Gastrocnemius medialis (tissue), 4 donors: ENCODE measurements at regions of chr15 and their contacts with region 1.

Region 1: GRCh38 chr15:80989518-80990478 is at the start of gene MESD:
- DNase-seq: peak; percentile 96
- ATAC-seq: peak; percentile 95
- H3K4me3 ChIP-seq: peak within 1 kb of the TSS; percentile 73 to 93 (median 91)
- H3K27ac ChIP-seq: peak within 1 kb of the TSS; percentile 87 to 91 (median 88)
- H3K4me1 ChIP-seq: peaks cover 26 to 37% of the 10 kb centered on the region in 2 donors
- H3K27me3 ChIP-seq: no peaks in the 10 kb centered on the region
- CTCF ChIP-seq: no peak
- POLR2A ChIP-seq: peak; percentile 82 to 85
- total RNA-seq, gene MESD: 5.5 to 7.9 (median 6.6) TPM

Region 2: DNA sequence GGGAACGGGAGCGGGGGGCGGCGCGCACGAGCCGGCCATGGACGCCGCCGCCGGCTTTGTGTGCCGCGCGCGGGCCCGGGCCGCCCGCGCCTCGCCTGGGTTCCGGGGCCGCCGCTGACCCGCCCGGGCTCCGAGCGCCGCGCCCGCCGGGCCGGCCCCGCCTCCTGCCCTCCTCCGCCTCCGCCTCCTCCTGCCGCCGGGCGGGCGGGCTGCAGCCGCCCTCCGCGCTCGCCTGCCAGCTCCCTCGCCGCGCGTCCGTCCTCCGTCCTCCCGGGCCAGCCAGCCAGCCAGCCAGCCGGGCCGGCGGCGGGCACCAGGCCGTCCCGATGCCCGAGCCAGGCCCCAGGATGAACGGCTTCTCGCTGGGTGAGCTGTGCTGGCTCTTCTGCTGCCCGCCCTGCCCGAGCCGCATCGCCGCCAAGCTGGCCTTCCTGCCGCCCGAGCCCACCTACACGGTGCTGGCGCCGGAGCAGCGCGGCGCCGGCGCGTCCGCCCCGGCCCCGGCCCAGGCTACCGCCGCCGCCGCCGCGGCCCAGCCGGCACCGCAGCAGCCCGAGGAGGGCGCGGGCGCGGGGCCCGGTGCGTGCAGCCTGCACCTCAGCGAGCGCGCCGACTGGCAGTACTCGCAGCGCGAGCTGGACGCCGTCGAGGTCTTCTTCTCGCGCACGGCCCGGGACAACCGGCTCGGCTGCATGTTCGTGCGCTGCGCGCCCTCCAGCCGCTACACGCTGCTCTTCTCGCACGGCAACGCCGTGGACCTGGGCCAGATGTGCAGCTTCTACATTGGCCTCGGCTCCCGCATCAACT is 294.5 kb before region 1 on chr15 and contains the start of gene ABHD17C:
- in situ Hi-C with region 1: no loop called
- intact Hi-C with region 1: loop called (anchors 10 kb)
- DNase-seq: peak; percentile 22 to 25
- ATAC-seq: peak; percentile 80 to 84
- H3K4me3 ChIP-seq: peak within 1 kb of the TSS; percentile 65 to 93 (median 82)
- H3K27ac ChIP-seq: peak within 1 kb of the TSS; percentile 64 to 82 (median 70)
- H3K4me1 ChIP-seq: peaks cover 7 to 10% of the 10 kb centered on the region in 2 donors
- H3K27me3 ChIP-seq: no peaks in the 10 kb centered on the region
- CTCF ChIP-seq: no peak
- POLR2A ChIP-seq: no peak
- total RNA-seq, gene ABHD17C: 0.98 to 3.3 (median 2.5) TPM in 3 of 4 donors, not detected in the other

Region 3: DNA sequence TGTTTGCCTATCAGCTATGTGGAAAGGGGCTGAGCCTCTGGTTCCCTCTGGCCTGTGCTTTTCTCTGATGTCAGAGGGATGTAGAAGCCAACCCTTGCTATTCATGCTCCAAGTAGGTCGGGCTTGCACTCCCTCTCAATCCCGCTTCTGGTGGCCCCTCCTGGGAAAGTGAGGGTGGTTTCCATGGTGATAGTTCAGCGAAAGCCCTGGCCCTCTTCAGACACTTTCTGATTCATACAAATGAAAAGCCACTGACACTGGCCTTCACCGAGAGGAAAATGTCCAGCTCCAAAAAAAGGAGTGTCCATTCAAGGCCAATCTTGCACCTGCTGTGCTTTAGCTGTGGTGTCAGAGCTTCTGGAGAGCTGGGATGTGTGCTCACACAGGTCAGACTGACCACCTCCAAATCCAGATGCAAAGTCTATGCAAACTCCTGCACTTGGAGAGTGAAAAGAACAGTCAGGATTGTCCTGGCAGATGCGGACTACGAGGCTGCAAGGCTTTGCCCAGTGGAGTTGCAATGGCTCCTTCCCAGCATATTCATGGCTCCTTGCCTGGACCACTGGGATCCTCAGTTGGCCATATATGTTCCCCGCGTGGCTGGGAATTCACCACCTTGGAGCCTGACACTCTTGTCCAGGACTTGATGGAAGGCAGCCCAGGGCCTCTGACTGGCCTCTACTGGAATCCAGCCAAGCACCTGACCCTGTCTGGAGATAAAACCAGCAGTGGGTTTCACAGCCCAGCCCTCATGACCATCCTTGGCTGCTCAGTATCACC is 114.0 kb before region 1 on chr15:
- in situ Hi-C with region 1: no loop called
- intact Hi-C with region 1: no loop called
- DNase-seq: peak in 1 of 2 donors; percentile 21
- ATAC-seq: no peak
- H3K4me3 ChIP-seq: no peak overlapping the region
- H3K27ac ChIP-seq: no peak overlapping the region
- H3K4me1 ChIP-seq: peaks cover 0 to 14% of the 10 kb centered on the region in 2 donors
- H3K27me3 ChIP-seq: no peaks in the 10 kb centered on the region
- CTCF ChIP-seq: no peak
- POLR2A ChIP-seq: no peak

Region 4: DNA sequence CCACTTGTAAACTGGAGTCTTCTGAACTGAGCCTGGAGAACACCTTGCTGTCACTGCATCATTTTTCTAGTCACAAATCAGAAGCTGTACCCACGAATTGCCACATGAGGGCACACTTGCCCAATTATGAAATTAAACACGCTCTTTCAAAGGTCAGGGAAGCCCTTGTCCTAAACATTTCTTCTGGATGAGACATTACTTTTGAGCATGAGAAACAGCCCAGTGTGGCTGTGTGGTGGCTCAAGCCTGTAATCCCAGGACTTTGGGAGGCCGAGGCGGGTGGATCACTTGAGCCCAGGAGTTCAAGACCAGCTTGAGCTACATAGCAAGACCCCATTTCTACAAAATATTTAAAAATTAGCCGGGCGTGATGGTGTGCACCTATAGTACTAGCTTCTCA is 116.8 kb after region 1 on chr15:
- in situ Hi-C with region 1: loop called in 2 of 4 experiments (anchors 10 kb)
- intact Hi-C with region 1: no loop called
- DNase-seq: peak in 1 of 2 donors; percentile 20
- ATAC-seq: peak; percentile 78 to 79
- H3K4me3 ChIP-seq: no peak overlapping the region
- H3K27ac ChIP-seq: no peak overlapping the region
- H3K4me1 ChIP-seq: no peaks in the 10 kb centered on the region
- H3K27me3 ChIP-seq: no peaks in the 10 kb centered on the region
- CTCF ChIP-seq: peak; percentile 49 to 74 (median 71)
- POLR2A ChIP-seq: no peak

Region 5: DNA sequence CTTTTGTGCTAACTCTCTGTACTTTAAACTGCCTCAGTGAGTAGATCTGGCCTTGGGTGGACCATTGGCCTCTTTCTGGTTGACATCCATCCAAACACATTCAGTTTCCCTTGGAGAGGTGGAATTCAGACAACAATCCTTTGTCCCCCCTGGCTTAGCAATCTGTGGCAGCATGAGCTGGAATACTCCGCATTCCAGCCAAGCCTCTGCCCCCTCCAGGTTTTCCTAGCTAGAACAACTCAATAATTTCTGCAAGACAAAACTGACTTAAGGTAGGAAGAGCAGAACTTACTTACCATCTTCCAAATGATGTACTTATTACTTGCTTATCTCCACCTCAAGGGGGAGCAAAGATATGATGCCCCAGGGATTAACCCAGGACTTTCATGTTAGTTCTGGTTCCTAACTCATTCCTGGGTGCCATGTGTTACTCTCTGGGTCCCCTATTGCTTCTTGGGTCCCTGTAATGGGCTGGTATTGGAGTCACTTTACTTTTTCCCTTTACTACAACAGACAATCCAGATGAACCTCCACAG is 185.1 kb after region 1 on chr15:
- in situ Hi-C with region 1: no loop called
- intact Hi-C with region 1: loop called (anchors 5 kb)
- DNase-seq: no peak
- ATAC-seq: no peak
- H3K4me3 ChIP-seq: no peak overlapping the region
- H3K27ac ChIP-seq: no peak overlapping the region
- H3K4me1 ChIP-seq: peaks cover 0 to 6% of the 10 kb centered on the region in 2 donors
- H3K27me3 ChIP-seq: no peaks in the 10 kb centered on the region
- CTCF ChIP-seq: no peak
- POLR2A ChIP-seq: no peak